Calu3 (cell line): ENCODE measurements at regions of chr6 and their contacts with region 1.

Region 1: GRCh38 chr6:17536586-17536985 is 63.5 kb upstream of the FAM8A1 start:
- DNase-seq: no peak
- H3K4me3 Mint-ChIP-seq: no peak overlapping the region
- H3K27ac Mint-ChIP-seq: no peak overlapping the region
- H3K4me1 Mint-ChIP-seq: no peaks in the 10 kb centered on the region
- H3K27me3 Mint-ChIP-seq: no peaks in the 10 kb centered on the region
- CTCF ChIP-seq: no peak

Region 2: DNA sequence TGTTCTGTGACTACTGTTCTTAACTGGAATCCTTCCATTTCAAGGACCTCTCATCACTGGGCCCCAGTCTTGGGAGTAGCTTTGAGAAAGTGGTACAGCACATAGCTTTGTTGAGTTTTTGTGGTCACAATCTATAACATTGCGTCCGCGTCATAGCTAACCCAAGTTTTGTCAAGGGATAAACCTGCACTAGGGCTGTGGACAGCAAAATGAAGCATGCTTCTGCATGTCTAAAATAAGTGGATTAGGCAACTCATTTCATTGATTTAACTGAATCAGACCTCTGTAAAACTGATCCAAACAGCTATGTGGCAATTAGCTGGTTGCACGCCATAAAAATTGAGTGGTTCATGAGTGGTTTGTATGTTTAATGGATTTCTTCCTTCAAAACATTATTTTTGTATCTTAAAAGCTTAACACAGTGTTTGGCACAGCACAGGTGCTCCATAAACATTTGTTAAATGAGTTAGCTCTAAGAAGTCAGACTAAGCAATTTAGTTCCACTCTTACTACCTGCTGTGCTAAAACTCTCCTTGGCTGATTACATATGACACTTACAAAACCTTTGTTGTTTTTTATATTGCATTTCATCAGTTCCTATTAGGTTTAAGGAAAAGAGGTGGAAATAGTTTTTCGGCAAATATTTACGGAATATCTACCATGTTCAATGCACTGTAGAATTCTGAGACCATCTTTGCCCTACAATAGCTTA is 615.0 kb before region 1 on chr6:
- CTCF ChIA-PET with region 1: interaction called, 16 read pairs
- intact Hi-C with region 1: no loop called
- DNase-seq: no peak
- H3K4me3 Mint-ChIP-seq: no peak overlapping the region
- H3K27ac Mint-ChIP-seq: no peak overlapping the region
- H3K4me1 Mint-ChIP-seq: no peaks in the 10 kb centered on the region
- H3K27me3 Mint-ChIP-seq: no peaks in the 10 kb centered on the region
- CTCF ChIP-seq: no peak

Region 3: GRCh38 chr6:17318435-17319165 is 218.0 kb before region 1 on chr6:
- CTCF ChIA-PET with region 1: no interaction called
- intact Hi-C with region 1: no loop called
- DNase-seq: no peak
- H3K4me3 Mint-ChIP-seq: no peak overlapping the region
- H3K27ac Mint-ChIP-seq: no peak overlapping the region
- H3K4me1 Mint-ChIP-seq: no peaks in the 10 kb centered on the region
- H3K27me3 Mint-ChIP-seq: no peaks in the 10 kb centered on the region
- CTCF ChIP-seq: no peak

Region 4: DNA sequence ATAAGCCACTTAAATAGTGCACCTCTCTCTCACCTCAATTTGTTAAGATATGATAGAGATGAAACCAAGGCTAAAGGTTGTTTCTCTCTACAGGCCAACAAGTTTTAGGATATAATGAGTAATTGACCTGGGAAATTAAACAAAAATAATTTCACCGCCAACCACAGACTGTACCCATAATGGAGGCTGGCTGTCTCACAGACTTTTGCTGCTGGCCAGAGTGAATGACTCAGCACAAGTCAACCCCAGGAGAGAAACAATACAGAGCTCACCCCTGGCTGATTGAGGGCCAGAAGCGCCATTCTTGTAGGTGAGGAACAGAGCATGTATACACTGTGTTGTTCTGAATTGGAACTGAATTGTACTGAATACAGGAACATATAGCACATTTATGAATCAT is 43.3 kb before region 1 on chr6:
- CTCF ChIA-PET with region 1: no interaction called
- intact Hi-C with region 1: no loop called
- DNase-seq: no peak
- H3K4me3 Mint-ChIP-seq: no peak overlapping the region
- H3K27ac Mint-ChIP-seq: no peak overlapping the region
- H3K4me1 Mint-ChIP-seq: no peaks in the 10 kb centered on the region
- H3K27me3 Mint-ChIP-seq: no peaks in the 10 kb centered on the region
- CTCF ChIP-seq: no peak

Region 5: DNA sequence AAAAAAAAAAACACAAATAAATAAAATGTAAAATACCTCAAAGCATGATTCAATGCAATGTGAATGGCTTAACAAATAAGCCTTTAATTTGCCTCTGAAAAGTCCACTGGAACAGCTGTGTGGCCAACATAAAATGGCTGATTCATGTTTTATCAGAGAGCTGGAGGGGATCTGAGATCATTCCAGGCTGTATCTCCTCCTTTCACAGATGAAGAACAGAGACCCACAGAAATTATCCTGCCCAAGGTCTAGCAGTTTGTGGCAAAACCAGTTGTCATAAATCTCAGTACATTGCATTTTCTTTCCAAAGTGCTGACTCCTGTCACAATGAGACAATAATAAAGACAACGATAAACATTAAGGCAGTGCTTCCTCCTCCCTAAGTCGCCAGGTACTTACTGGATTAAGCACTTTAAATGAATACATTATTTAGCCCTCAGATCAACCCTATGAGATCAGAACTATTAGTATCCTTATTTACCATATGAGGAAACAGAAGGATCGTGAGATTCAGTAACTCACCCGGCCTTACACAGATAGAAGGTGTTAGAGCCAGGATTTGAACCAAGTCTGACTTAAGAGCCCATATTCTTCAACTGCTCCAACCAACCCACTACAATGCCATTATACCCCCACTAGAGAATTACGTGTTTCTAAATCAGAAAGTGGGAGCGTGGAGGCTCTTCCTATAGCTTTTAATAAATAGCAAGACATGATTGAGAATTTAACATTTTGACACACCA is 332.6 kb after region 1 on chr6:
- CTCF ChIA-PET with region 1: no interaction called
- intact Hi-C with region 1: no loop called
- DNase-seq: no peak
- H3K4me3 Mint-ChIP-seq: no peak overlapping the region
- H3K27ac Mint-ChIP-seq: no peak overlapping the region
- H3K4me1 Mint-ChIP-seq: peaks cover 9% of the 10 kb centered on the region
- H3K27me3 Mint-ChIP-seq: no peaks in the 10 kb centered on the region
- CTCF ChIP-seq: no peak

Region 6: GRCh38 chr6:17938901-17939300 is 402.3 kb after region 1 on chr6:
- CTCF ChIA-PET with region 1: no interaction called
- intact Hi-C with region 1: no loop called
- DNase-seq: no peak
- H3K4me3 Mint-ChIP-seq: no peak overlapping the region
- H3K27ac Mint-ChIP-seq: no peak overlapping the region
- H3K4me1 Mint-ChIP-seq: no peaks in the 10 kb centered on the region
- H3K27me3 Mint-ChIP-seq: no peaks in the 10 kb centered on the region
- CTCF ChIP-seq: no peak